Activated T-helper 1 cell treated with anti-CD3 and anti-CD28 coated beads, Interleukin-12 subunit alpha, Interleukin-12 subunit beta, Interleukin-2, Interleukin-4 antibody, amounts not matched to agents 30 ng/mL and 10 ng/mL and 1 ng/mL, durations not matched to agents 14 hours and 24 hours and 36 hours (primary cell): ENCODE measurements at regions of chr10 and their contacts with region 1.

Region 1: GRCh38 chr10:121974535-121975294 is at the start of gene NSMCE4A:
- DNase-seq: peak; percentile 68
- H3K4me3 Mint-ChIP-seq: peak within 1 kb of the TSS; percentile 89
- H3K27ac Mint-ChIP-seq: no peak within 1 kb of the TSS
- H3K4me1 Mint-ChIP-seq: peaks cover 19% of the 10 kb centered on the region
- H3K27me3 Mint-ChIP-seq: no peaks in the 10 kb centered on the region
- total RNA-seq, gene NSMCE4A: 77.2 and 79.1 TPM in 2 replicates

Region 2: DNA sequence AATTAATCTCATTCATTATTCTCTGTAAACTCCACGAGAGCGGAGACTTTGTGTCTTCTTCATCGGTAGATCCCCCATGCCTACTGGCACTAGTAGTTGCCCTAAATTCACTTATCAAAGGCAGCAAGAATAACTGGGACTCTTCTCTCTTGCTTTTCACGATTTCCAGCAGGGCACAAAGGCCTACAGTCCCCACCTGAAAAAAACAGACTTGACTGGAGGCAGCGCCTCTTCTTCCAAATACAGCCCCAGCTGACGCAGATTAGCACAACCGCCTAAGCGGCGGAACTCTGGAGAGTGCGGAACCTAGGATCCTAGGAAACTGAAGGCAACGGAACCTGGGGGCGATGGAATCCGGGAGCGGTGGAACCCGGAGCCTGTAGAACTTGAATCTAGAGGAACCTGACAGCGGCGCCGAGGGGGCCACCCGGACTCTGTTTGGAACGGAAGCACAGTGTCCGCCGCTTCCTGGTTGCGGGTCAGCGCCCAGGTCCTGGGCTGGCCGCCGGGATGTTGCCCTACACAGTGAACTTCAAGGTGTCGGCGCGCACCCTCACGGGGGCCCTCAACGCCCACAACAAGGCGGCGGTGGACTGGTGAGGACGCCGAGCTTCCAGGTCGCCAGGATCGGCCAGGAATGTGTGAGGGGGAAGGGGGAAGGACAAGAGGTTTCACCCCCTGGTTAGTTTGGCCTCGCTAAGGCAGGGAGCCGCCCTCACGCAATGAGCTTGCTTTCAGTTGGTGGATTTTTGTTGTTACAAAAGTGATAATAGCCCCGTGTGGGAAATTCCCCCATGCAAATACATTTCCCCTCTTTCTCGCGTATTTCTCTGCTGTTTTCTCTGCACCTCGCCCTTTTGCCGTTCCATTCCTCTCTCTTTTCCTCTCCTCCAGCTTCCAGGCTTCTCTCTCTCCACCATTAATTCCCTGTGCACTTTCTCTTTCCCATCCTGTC is 1123.5 kb before region 1 on chr10 and contains the start of gene WDR11:
- intact Hi-C with region 1: loop called (anchors 10 kb)
- DNase-seq: peak; percentile 65
- H3K4me3 Mint-ChIP-seq: peak within 1 kb of the TSS; percentile 95
- H3K27ac Mint-ChIP-seq: peak within 1 kb of the TSS; percentile 96
- H3K4me1 Mint-ChIP-seq: peaks cover 49% of the 10 kb centered on the region
- H3K27me3 Mint-ChIP-seq: peaks cover 4% of the 10 kb centered on the region
- total RNA-seq, gene WDR11: 53.0 and 53.1 TPM in 2 replicates